HepG2 (cell line): ENCODE measurements at regions of chr21 and their contacts with region 1.

Region 1: GRCh38 chr21:16419188-16419921 is 689.6 kb downstream of the USP25 start:
- DNase-seq: peak; percentile 12
- ATAC-seq: peak; percentile 99
- H3K4me3 ChIP-seq: no peak overlapping the region; a peak in 1 of 6 replicates
- H3K27ac ChIP-seq: no peak overlapping the region
- H3K4me1 ChIP-seq: peaks cover 16% of the 10 kb centered on the region
- H3K27me3 ChIP-seq: no peaks in the 10 kb centered on the region
- CTCF ChIP-seq: no peak
- EP300 ChIP-seq: no peak
- POLR2A ChIP-seq: no peak
- RAD21 ChIP-seq: no peak

Region 2: DNA sequence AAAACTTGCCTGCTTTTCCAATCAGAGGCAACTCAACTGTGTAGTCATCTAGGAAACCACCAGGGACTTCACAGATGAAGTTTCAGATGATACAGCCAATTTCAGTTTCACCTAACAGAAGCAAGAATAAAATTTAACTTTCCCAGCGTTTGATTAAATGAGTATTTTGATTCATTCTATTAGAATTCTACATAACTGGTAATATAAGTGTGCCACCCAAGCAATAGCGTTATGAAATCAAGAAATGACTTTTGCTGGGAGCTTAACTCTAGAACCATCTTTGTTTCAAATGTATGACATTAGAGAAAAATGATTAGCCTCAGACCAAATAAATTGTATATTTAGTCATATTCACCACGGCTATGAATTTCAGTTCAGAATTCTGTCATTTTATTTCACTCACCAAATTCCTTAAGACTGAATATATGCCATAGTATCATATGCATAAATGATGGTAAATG is 1593.8 kb before region 1 on chr21:
- CTCF ChIA-PET with region 1: no interaction called
- POLR2A ChIA-PET with region 1: no interaction called
- in situ Hi-C with region 1: no loop called
- intact Hi-C with region 1: loop called (anchors 10 kb)
- DNase-seq: no peak
- ATAC-seq: no peak
- H3K4me3 ChIP-seq: no peak overlapping the region
- H3K27ac ChIP-seq: no peak overlapping the region
- H3K4me1 ChIP-seq: peaks cover 4% of the 10 kb centered on the region
- H3K27me3 ChIP-seq: no peaks in the 10 kb centered on the region
- CTCF ChIP-seq: no peak
- EP300 ChIP-seq: no peak
- POLR2A ChIP-seq: no peak
- RAD21 ChIP-seq: no peak